ENCODE measurements at regions of chr20 and their contacts with region 1.

Region 1: GRCh38 chr20:60381643-60382400 is 423.6 kb downstream of the CDH26 start:
- DNase-seq: no peak
- H3K4me3 ChIP-seq: no peak overlapping the region
- H3K27ac ChIP-seq: no peak overlapping the region
- H3K4me1 ChIP-seq: no peaks in the 10 kb centered on the region
- H3K27me3 ChIP-seq: no peaks in the 10 kb centered on the region
- CTCF ChIP-seq: no peak
- POLR2A ChIP-seq: no peak

Region 2: DNA sequence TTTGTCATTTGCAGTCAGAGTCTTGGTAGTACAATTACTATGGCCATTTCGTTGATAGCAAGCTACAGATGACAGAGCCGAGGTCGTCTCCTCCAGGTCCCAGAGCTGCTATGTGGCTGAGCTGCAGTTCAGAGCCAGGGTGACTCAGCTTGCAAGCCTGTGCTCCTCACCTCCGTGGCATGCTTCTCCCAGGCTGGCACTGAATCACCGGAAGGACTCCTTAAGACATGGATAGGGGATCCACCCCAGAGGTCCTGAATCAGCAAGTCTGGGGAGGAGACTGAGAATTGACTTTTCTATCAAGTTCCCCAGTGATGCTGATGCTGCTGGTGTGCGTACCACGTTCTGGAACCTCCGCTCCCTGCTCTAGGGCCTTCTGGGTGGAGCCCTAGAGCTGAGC is 132.4 kb before region 1 on chr20:
- intact Hi-C with region 1: loop called (anchors 5 kb)
- DNase-seq: peak in 1 of 2 donors; percentile 64
- H3K4me3 ChIP-seq: no peak overlapping the region
- H3K27ac ChIP-seq: no peak overlapping the region
- H3K4me1 ChIP-seq: no peaks in the 10 kb centered on the region
- H3K27me3 ChIP-seq: no peaks in the 10 kb centered on the region
- CTCF ChIP-seq: no peak
- POLR2A ChIP-seq: no peak

Measured in vagina (tissue), 2 donors.